ENCODE measurements at regions of chr1 and their contacts with region 1.

Region 1: GRCh38 chr1:174953285-174954072 is 46.3 kb upstream of the CACYBP start:
- DNase-seq: no peak
- H3K4me3 ChIP-seq: no peak overlapping the region
- H3K27ac ChIP-seq: peak overlapping the region in 4 of 5 donors; percentile 27 to 77 (median 38)
- H3K4me1 ChIP-seq: peaks cover 14 to 29% (median 21%) of the 10 kb centered on the region in 4 donors
- H3K27me3 ChIP-seq: no peaks in the 10 kb centered on the region
- CTCF ChIP-seq: no peak
- EP300 ChIP-seq: no peak
- POLR2A ChIP-seq: no peak

Region 2: DNA sequence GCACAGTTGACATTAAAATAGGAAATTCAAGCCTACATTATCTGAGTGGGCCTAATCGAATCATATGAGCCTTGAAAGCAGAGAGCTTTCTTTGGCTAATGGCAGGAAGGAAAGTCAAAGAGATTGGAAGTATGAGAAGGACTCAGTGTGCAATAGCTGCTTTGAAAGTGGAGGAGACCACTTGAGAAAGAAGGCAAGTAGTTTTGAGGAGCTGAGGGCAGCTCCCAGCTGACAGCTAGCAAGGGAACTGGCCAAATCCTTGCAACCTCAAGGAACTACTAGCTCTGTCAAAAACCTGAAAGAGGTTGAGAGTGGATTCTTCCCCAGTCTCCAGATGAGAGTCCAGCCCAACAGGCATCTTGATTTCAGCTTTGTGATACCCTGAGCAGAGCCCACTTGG is 102.8 kb before region 1 on chr1:
- intact Hi-C with region 1: no loop called
- DNase-seq: no peak
- H3K4me3 ChIP-seq: no peak overlapping the region
- H3K27ac ChIP-seq: no peak overlapping the region
- H3K4me1 ChIP-seq: no peaks in the 10 kb centered on the region
- H3K27me3 ChIP-seq: no peaks in the 10 kb centered on the region
- CTCF ChIP-seq: no peak
- EP300 ChIP-seq: no peak
- POLR2A ChIP-seq: no peak

Region 3: GRCh38 chr1:174902531-174903099 is 50.9 kb before region 1 on chr1:
- intact Hi-C with region 1: loop called (anchors 5 kb)
- DNase-seq: peak in 1 of 2 donors; percentile 53
- H3K4me3 ChIP-seq: no peak overlapping the region
- H3K27ac ChIP-seq: no peak overlapping the region
- H3K4me1 ChIP-seq: peaks cover 0 to 12% (median 5%) of the 10 kb centered on the region in 4 donors
- H3K27me3 ChIP-seq: no peaks in the 10 kb centered on the region
- CTCF ChIP-seq: no peak
- EP300 ChIP-seq: no peak
- POLR2A ChIP-seq: no peak

Measured in stomach (tissue), 19 donors.